Aorta (tissue), 5 donors: ENCODE measurements at regions of chr5 and their contacts with region 1.

Region 1: DNA sequence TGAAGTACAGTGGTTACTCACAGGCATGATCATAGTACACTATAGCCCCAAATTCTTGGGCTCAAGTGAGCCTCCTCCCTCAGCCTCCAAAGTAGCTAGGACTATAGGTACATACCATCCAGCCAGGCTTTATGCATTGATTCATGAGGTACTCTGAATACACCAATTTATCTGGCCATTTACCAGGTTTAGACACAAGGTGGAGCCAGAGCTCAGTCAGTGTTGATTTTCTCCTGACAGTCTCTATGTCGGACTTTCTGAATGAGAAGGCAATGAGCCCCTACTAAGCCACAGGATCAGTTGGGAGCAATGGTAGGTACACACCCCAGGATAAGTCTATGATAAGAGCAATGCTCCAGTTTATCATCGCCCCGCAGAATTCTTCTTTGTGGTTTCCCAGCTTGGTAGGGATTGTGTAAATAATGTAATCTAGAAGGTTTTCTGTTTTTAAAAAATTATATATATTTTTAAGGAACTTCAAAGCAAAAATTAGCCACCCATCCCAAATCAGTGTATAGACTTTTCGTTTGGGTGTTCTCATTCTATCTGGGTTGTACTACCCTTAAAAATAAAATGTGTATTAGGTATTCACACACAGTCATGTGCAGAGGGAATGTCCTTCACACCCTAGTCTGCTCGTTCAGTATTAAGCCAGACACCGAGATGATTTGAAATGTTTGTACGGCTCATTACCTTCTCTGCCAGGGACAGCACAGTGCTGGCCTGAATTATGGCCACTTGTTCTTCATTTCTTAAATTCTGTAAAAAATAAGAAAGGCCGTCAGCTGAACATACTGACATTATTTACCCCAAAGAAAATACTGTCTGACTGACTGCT is 118.4 kb upstream of the DPYSL3 start:
- DNase-seq: no peak
- ATAC-seq: peak; percentile 79
- H3K4me3 ChIP-seq: no peak overlapping the region
- H3K27ac ChIP-seq: no peak overlapping the region
- H3K4me1 ChIP-seq: no peaks in the 10 kb centered on the region
- H3K27me3 ChIP-seq: no peaks in the 10 kb centered on the region

Region 2: DNA sequence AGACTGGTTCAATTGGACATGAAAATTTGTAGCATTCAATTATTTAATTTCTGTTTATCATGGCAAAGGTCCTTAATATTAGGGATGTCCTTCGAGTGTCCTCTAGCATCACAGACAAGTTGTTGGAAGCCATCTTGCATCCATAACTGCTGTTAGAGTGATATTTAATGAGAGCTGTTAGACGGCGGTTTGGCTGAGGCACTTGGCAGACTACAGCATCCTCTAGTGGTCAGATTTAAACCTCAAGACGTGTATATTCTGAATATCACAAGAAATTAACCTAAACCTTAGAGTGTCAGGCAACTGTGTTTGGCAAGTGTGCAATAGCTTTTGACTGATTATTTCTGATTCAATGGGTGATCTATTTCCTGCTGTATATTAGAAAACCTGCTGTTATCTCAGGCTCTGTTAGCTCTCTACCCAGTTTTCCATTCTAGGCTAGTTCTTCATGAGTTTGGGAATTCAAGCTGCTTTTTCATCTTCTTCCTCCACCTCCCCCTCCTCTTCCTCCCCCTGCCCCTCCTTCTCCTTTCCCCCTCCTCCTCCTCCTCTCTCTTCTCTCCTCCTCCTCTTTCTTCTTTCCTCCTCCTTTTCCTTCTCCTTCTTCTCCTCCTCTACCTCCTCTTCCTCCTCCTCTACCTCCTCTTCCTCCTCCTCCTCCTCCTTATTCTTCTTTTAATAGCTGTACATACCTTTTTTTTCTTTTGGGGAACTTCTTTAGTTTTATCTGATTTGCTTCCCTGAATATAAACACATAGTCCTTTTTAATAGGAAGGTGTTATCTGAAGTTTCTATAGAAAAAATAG is 194.6 kb after region 1 on chr5:
- intact Hi-C with region 1: loop called (anchors 1 to 2 kb)
- DNase-seq: peak; percentile 47 to 66
- ATAC-seq: peak; percentile 75
- H3K4me3 ChIP-seq: no peak overlapping the region
- H3K27ac ChIP-seq: no peak overlapping the region
- H3K4me1 ChIP-seq: no peaks in the 10 kb centered on the region
- H3K27me3 ChIP-seq: no peaks in the 10 kb centered on the region